ENCODE measurements at regions of chr3 and their contacts with region 1.

Region 1: DNA sequence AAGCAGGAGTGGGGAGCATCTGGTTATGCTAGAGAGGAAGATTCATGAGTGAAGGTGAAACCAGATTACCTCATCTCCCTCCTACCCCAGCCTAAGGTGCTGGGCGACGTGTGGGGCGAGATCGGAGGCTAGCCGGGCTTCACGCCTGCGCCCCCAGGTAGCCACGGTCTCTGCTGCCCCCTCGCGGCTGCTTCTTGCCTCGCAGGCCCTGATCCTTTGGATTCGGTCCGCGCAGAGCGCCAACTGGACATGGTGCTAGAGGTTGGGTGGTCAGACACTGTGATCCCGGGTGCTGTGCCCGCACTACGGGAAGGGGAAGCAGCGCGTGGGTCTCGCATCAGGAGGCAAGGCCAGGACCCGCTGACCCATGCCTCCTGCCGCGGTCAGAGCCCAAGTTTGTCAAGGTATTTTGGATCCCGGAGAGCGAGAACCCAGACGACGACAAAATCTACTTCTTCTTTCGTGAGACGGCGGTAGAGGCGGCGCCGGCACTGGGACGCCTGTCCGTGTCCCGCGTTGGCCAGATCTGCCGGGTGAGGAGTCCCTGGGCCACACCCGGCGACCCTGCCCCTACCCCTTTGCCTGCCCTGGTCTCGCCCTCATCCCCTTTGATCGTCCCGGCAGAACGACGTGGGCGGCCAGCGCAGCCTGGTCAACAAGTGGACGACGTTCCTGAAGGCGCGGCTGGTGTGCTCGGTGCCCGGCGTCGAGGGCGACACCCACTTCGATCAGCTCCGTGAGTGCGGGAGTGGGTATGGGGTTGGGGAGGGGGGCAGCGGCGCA is 4.2 kb downstream of the SEMA3B start:
- DNase-seq: peak; percentile 78 to 94 (median 89)
- H3K4me3 ChIP-seq: peak overlapping the region; percentile 15
- H3K27ac ChIP-seq: no peak overlapping the region
- H3K4me1 ChIP-seq: peaks cover 19% of the 10 kb centered on the region
- H3K27me3 ChIP-seq: no peaks in the 10 kb centered on the region
- CTCF ChIP-seq: peak; percentile 97 to 99 (median 98)
- EP300 ChIP-seq: no peak
- POLR2A ChIP-seq: peak; percentile 39

Region 2: GRCh38 chr3:49966230-49966942 is 306.7 kb before region 1 on chr3:
- intact Hi-C with region 1: no loop called
- DNase-seq: no peak
- H3K4me3 ChIP-seq: no peak overlapping the region
- H3K27ac ChIP-seq: no peak overlapping the region
- H3K4me1 ChIP-seq: peaks cover 26% of the 10 kb centered on the region
- H3K27me3 ChIP-seq: no peaks in the 10 kb centered on the region
- CTCF ChIP-seq: no peak
- EP300 ChIP-seq: no peak
- POLR2A ChIP-seq: no peak

Region 3: DNA sequence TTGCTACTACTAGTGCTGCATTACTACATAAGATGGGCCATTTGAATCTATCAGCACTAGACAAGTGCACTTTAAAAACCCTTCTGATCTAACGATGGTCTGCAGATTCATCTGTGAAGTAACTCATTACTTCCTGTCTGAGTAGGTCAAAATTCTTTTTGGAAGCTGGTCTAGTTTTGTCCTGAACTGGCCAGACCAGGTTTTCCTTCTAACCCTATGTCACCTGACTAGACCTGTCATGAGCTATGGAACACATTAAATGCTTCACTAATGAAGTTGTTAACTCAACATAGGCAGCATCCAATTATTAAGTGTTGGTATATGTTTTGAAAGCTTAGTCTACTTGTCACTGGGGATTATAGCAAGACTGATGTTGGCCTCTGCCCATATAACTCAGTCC is 194.5 kb before region 1 on chr3:
- intact Hi-C with region 1: no loop called
- DNase-seq: no peak
- H3K4me3 ChIP-seq: no peak overlapping the region
- H3K27ac ChIP-seq: no peak overlapping the region
- H3K4me1 ChIP-seq: no peaks in the 10 kb centered on the region
- H3K27me3 ChIP-seq: no peaks in the 10 kb centered on the region
- CTCF ChIP-seq: no peak
- EP300 ChIP-seq: no peak
- POLR2A ChIP-seq: no peak

Region 4: GRCh38 chr3:50112462-50112861 is 160.6 kb before region 1 on chr3:
- intact Hi-C with region 1: loop called in 1 of 4 experiments (anchors 10 kb)
- DNase-seq: peak in 1 of 5 donors; percentile 9
- H3K4me3 ChIP-seq: no peak overlapping the region
- H3K27ac ChIP-seq: no peak overlapping the region
- H3K4me1 ChIP-seq: no peaks in the 10 kb centered on the region
- H3K27me3 ChIP-seq: no peaks in the 10 kb centered on the region
- CTCF ChIP-seq: no peak
- EP300 ChIP-seq: no peak
- POLR2A ChIP-seq: no peak

Region 5: GRCh38 chr3:50121416-50122032 is 151.6 kb before region 1 on chr3:
- intact Hi-C with region 1: loop called in 2 of 4 experiments (anchors 10 kb)
- DNase-seq: peak; percentile 72 to 85 (median 80)
- H3K4me3 ChIP-seq: no peak overlapping the region
- H3K27ac ChIP-seq: no peak overlapping the region
- H3K4me1 ChIP-seq: peaks cover 9% of the 10 kb centered on the region
- H3K27me3 ChIP-seq: no peaks in the 10 kb centered on the region
- CTCF ChIP-seq: peak; percentile 69 to 74 (median 72)
- EP300 ChIP-seq: no peak
- POLR2A ChIP-seq: no peak

Region 6: GRCh38 chr3:50192689-50193141 is 80.4 kb before region 1 on chr3:
- intact Hi-C with region 1: loop called (anchors 5 kb)
- DNase-seq: peak in 4 of 5 donors; percentile 68 to 83 (median 78)
- H3K4me3 ChIP-seq: no peak overlapping the region
- H3K27ac ChIP-seq: no peak overlapping the region
- H3K4me1 ChIP-seq: peaks cover 3% of the 10 kb centered on the region
- H3K27me3 ChIP-seq: peaks cover 10% of the 10 kb centered on the region
- CTCF ChIP-seq: peak; percentile 77 to 85 (median 84)
- EP300 ChIP-seq: no peak
- POLR2A ChIP-seq: no peak

Region 7: DNA sequence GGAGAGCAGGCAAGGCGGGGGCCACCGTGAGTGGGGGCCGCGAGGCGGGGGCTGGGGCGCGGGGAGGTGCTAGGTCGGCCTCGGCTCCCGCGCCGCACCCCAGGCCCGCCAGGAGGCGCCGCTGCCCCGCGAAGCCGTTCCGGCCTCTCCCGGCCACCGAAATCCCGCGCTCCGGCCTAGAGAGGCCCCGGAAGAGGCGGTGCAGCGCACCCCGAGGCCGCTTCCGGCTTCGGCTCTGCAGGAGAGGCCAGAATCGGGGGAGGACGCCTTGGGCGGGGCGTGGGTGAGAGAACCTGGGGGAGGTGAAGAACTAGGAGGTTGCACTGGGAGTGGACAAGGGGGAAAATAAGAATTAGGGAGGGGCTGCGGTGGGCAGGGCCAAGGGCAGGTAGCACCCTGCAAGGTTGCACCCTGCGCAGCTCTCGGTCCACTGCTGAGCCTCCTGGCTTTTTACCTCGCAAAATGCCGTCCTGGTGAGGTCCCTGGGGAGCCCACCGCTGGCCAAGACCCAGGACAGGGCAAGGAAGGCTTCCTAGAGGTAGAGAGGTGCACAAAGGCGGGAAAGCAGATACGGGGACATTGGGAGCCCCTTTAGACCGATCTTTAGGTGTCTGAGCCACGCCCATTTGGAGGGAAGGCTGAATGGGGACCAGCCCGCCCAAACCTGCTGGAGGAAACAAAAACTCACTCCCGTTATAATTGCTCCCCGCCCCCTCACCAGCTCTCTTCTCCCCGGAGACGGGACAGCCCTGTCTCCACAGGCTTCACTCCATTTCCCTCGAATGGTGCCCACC is 45.5 kb before region 1 on chr3:
- intact Hi-C with region 1: loop called (anchors 1 to 5 kb)
- DNase-seq: peak; percentile 91 to 95 (median 93)
- H3K4me3 ChIP-seq: peak overlapping the region; percentile 70
- H3K27ac ChIP-seq: peak overlapping the region in 1 of 2 donors; percentile 18
- H3K4me1 ChIP-seq: peaks cover 8% of the 10 kb centered on the region
- H3K27me3 ChIP-seq: no peaks in the 10 kb centered on the region
- CTCF ChIP-seq: peak; percentile 82 to 95 (median 94)
- EP300 ChIP-seq: no peak
- POLR2A ChIP-seq: no peak

Region 8: DNA sequence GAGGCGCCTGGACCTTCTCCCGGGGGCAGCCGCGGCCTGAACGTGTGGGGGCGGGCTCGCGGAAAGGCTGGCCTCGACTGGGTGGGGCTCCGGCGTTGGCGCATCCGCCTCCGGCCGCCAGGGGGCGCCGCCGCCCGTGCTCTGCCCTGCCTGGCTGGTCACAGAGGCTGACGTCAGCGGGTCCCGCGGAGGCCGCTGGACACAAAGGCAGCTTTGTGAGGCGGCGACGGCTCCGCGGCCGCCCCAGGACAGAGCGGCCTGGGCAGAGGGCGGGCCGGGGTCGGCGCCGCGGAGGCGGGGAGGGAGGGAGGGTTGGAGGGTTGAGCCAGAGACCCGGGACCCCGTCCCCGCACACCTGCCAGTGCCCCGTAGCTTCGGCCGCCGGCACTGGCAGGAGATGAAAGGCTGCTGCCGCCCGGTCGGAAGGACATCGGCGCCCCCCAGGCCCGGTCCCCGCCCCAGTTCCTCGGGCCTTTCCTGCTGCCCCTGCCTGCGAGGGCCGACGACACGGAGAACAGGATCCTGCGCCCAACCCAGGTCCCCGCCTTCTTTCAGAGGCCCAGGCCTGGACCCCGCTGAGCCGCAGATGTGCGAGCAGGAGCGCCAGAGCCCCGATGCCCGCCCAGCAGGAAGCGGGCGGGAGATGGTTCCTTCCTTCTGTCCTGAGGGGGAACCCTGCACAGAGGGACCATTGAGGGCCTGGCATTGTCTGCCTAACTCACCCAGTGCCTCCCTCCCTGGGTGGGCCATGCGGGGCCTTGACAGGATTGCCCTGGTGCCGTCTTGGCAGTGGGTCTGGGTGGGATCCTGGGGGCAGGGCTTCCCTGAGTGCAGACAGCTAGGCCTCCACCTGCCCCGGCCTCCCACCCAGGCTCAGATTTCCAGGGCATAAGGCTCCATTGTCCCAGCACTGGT is 12.8 kb before region 1 on chr3:
- intact Hi-C with region 1: loop called in 1 of 4 experiments (anchors 2 kb)
- DNase-seq: peak; percentile 93 to 97 (median 96)
- H3K4me3 ChIP-seq: peak overlapping the region; percentile 60
- H3K27ac ChIP-seq: peak overlapping the region; percentile 97 to 99
- H3K4me1 ChIP-seq: peaks cover 22% of the 10 kb centered on the region
- H3K27me3 ChIP-seq: no peaks in the 10 kb centered on the region
- CTCF ChIP-seq: peak; percentile 99 to 100 (median 100)
- EP300 ChIP-seq: no peak
- POLR2A ChIP-seq: peak; percentile 92

Region 9: GRCh38 chr3:50562861-50563260 is 289.8 kb after region 1 on chr3:
- intact Hi-C with region 1: no loop called
- DNase-seq: no peak
- H3K4me3 ChIP-seq: no peak overlapping the region
- H3K27ac ChIP-seq: no peak overlapping the region
- H3K4me1 ChIP-seq: peaks cover 6% of the 10 kb centered on the region
- H3K27me3 ChIP-seq: no peaks in the 10 kb centered on the region
- CTCF ChIP-seq: no peak
- EP300 ChIP-seq: no peak
- POLR2A ChIP-seq: no peak